ENCODE measurements at regions of chr1 and their contacts with region 1.

Region 1: DNA sequence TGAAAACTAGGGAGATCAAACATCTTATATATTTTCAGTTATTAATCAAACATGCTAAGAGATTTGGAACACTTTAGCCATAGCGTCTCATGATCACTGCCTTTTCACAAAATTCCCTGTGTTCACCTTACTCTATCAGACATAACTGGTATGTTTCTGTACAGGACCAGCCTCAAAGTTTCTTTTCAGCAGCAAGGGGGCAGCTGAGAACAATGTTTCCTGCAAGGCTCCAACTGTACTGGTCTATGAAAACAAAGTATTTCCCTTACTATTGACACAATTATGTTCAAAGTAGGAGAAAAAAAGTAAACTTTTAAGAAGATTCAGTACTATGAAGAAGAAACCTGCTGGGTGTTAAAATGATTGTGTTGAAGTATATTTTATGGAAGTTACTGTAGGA is 98.5 kb downstream of the ATF6 start:
- DNase-seq: peak; percentile 51
- ATAC-seq: peak; percentile 84
- H3K4me3 ChIP-seq: no peak overlapping the region
- H3K27ac ChIP-seq: no peak overlapping the region
- H3K4me1 ChIP-seq: peaks cover 5% of the 10 kb centered on the region; the same call in 1 of the 2 replicates
- H3K27me3 ChIP-seq: no peaks in the 10 kb centered on the region
- CTCF ChIP-seq: peak; percentile 56
- POLR2A ChIP-seq: no peak
- RAD21 ChIP-seq: peak; percentile 56

Region 2: GRCh38 chr1:161805399-161806197 is 59.0 kb before region 1 on chr1:
- CTCF ChIA-PET with region 1: no interaction called
- POLR2A ChIA-PET with region 1: no interaction called
- dilution Hi-C with region 1: no loop called
- in situ Hi-C with region 1: no loop called
- intact Hi-C with region 1: loop called (anchors 5 kb)
- DNase-seq: no peak
- ATAC-seq: no peak; the same call in 1 of the 2 replicates
- H3K4me3 ChIP-seq: no peak overlapping the region
- H3K27ac ChIP-seq: no peak overlapping the region
- H3K4me1 ChIP-seq: no peaks in the 10 kb centered on the region
- H3K27me3 ChIP-seq: no peaks in the 10 kb centered on the region
- CTCF ChIP-seq: no peak
- POLR2A ChIP-seq: no peak
- RAD21 ChIP-seq: no peak

Region 3: GRCh38 chr1:162023547-162024501 is 159.2 kb after region 1 on chr1 and contains the start of gene OLFML2B:
- CTCF ChIA-PET with region 1: interaction called, 16 read pairs
- POLR2A ChIA-PET with region 1: no interaction called
- dilution Hi-C with region 1: no loop called
- in situ Hi-C with region 1: no loop called
- intact Hi-C with region 1: loop called (anchors 1 kb)
- DNase-seq: peak; percentile 76
- ATAC-seq: peak; percentile 93
- H3K4me3 ChIP-seq: peak within 1 kb of the TSS; percentile 68
- H3K27ac ChIP-seq: no peak within 1 kb of the TSS; the same call in 1 of the 2 replicates
- H3K4me1 ChIP-seq: peaks cover 5% of the 10 kb centered on the region; the same call in 1 of the 2 replicates
- H3K27me3 ChIP-seq: peaks cover 6% of the 10 kb centered on the region
- CTCF ChIP-seq: peak; percentile 52
- POLR2A ChIP-seq: no peak
- RAD21 ChIP-seq: peak; percentile 66
- total RNA-seq, gene OLFML2B: 0.36 and 0.56 TPM in 2 replicates

Region 4: GRCh38 chr1:162035241-162035640 is 170.7 kb after region 1 on chr1:
- CTCF ChIA-PET with region 1: interaction called, 16 read pairs
- POLR2A ChIA-PET with region 1: no interaction called
- dilution Hi-C with region 1: no loop called
- in situ Hi-C with region 1: no loop called
- intact Hi-C with region 1: loop called (anchors 1 kb)
- DNase-seq: no peak
- ATAC-seq: no peak
- H3K4me3 ChIP-seq: no peak overlapping the region
- H3K27ac ChIP-seq: no peak overlapping the region
- H3K4me1 ChIP-seq: no peaks in the 10 kb centered on the region
- H3K27me3 ChIP-seq: peaks cover 23% of the 10 kb centered on the region
- CTCF ChIP-seq: no peak
- POLR2A ChIP-seq: no peak
- RAD21 ChIP-seq: no peak

Region 5: DNA sequence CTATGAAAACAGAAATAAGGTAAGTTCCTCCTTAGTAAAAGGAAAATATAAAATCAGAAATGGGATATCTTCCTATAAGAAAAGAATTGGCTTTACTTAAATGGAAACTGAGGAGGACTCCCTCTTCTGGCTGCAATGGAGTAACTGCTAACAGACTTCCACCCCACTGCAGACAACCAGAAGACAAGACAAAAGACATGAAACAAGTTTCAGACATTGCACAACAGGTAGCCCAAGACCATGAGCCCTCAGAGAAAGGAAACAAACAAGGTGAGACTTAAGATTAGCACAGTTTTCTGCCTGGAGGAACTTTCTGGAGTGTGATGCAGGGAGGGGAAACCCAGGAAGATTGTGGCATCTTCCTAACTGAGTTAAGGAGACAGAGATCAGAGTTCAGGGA is 176.1 kb after region 1 on chr1:
- CTCF ChIA-PET with region 1: interaction called, 16 read pairs
- POLR2A ChIA-PET with region 1: no interaction called
- dilution Hi-C with region 1: no loop called
- in situ Hi-C with region 1: no loop called
- intact Hi-C with region 1: loop called (anchors 1 kb)
- DNase-seq: peak; percentile 50
- ATAC-seq: peak; percentile 62
- H3K4me3 ChIP-seq: no peak overlapping the region
- H3K27ac ChIP-seq: no peak overlapping the region
- H3K4me1 ChIP-seq: no peaks in the 10 kb centered on the region
- H3K27me3 ChIP-seq: peaks cover 10% of the 10 kb centered on the region
- CTCF ChIP-seq: peak; percentile 52; the same call in 1 of the 2 replicates
- POLR2A ChIP-seq: no peak
- RAD21 ChIP-seq: peak; percentile 36

Measured in IMR-90 (cell line).